ENCODE measurements at regions of chr4 and their contacts with region 1.

Region 1: GRCh38 chr4:86593688-86594558 is at the start of gene PTPN13:
- DNase-seq: peak; percentile 98
- H3K4me3 ChIP-seq: peak within 1 kb of the TSS; percentile 38 to 83 (median 70)
- H3K27ac ChIP-seq: no peak within 1 kb of the TSS
- H3K4me1 ChIP-seq: peaks cover 12% of the 10 kb centered on the region
- H3K27me3 ChIP-seq: no peaks in the 10 kb centered on the region
- CTCF ChIP-seq: no peak
- POLR2A ChIP-seq: peak; percentile 43
- total RNA-seq, gene PTPN13: 2.2 and 2.9 TPM in 2 replicates

Region 2: GRCh38 chr4:86174496-86174895 is 419.4 kb before region 1 on chr4:
- CTCF ChIA-PET with region 1: no interaction called
- POLR2A ChIA-PET with region 1: no interaction called
- dilution Hi-C with region 1: no loop called
- intact Hi-C with region 1: no loop called
- DNase-seq: no peak
- H3K4me3 ChIP-seq: no peak overlapping the region
- H3K27ac ChIP-seq: no peak overlapping the region
- H3K4me1 ChIP-seq: no peaks in the 10 kb centered on the region
- H3K27me3 ChIP-seq: peaks cover 0 to 11% of the 10 kb centered on the region in 2 experiments
- CTCF ChIP-seq: no peak
- POLR2A ChIP-seq: no peak

Region 3: DNA sequence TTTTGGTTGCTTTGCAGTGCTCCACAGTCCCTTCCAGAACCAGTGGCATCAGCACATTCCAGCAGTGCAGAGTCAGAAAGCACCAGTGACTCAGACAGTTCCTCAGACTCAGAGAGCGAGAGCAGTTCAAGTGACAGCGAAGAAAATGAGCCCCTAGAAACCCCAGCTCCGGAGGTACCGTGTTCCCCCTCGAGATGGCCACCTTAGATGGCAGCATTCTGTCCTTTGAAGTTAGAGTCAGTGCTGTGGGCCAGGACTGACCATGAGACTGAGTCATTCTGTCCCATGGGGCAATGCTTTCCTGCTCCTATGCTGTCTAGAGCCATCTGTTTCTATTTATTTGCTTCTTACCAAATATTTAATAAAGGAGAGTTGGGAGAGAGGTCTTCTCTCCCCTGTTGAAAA is 514.2 kb after region 1 on chr4:
- CTCF ChIA-PET with region 1: no interaction called
- POLR2A ChIA-PET with region 1: no interaction called
- dilution Hi-C with region 1: no loop called
- intact Hi-C with region 1: loop called (anchors 10 kb)
- DNase-seq: peak; percentile 58
- H3K4me3 ChIP-seq: no peak overlapping the region
- H3K27ac ChIP-seq: peak overlapping the region; percentile 60
- H3K4me1 ChIP-seq: peaks cover 40% of the 10 kb centered on the region
- H3K27me3 ChIP-seq: no peaks in the 10 kb centered on the region
- CTCF ChIP-seq: no peak
- POLR2A ChIP-seq: no peak

Region 4: GRCh38 chr4:87235020-87235671 is 641.2 kb after region 1 on chr4:
- CTCF ChIA-PET with region 1: no interaction called
- POLR2A ChIA-PET with region 1: no interaction called
- dilution Hi-C with region 1: no loop called
- intact Hi-C with region 1: loop called (anchors 10 kb)
- DNase-seq: no peak
- H3K4me3 ChIP-seq: peak overlapping the region in 2 of 3 experiments; percentile 74 to 96
- H3K27ac ChIP-seq: no peak overlapping the region
- H3K4me1 ChIP-seq: peaks cover 2% of the 10 kb centered on the region
- H3K27me3 ChIP-seq: peaks cover 0 to 6% of the 10 kb centered on the region in 2 experiments
- CTCF ChIP-seq: no peak
- POLR2A ChIP-seq: no peak